CD4-positive, alpha-beta memory T cell (primary cell): ENCODE measurements at regions of chr22 and their contacts with region 1.

Region 1: GRCh38 chr22:21972293-21972779 is 10.3 kb downstream of the TOP3B start:
- DNase-seq: peak in 4 of 5 donors; percentile 30 to 42 (median 37)
- H3K4me3 ChIP-seq: no peak overlapping the region
- H3K4me3 Mint-ChIP-seq: no peak overlapping the region
- H3K27ac ChIP-seq: no peak overlapping the region
- H3K27ac Mint-ChIP-seq: peak overlapping the region in 1 of 7 donors; percentile 42
- H3K4me1 ChIP-seq: no peaks in the 10 kb centered on the region
- H3K4me1 Mint-ChIP-seq: peaks cover 6 to 16% (median 11%) of the 10 kb centered on the region in 4 donors
- H3K27me3 ChIP-seq: no peaks in the 10 kb centered on the region
- H3K27me3 Mint-ChIP-seq: no peaks in the 10 kb centered on the region

Region 2: DNA sequence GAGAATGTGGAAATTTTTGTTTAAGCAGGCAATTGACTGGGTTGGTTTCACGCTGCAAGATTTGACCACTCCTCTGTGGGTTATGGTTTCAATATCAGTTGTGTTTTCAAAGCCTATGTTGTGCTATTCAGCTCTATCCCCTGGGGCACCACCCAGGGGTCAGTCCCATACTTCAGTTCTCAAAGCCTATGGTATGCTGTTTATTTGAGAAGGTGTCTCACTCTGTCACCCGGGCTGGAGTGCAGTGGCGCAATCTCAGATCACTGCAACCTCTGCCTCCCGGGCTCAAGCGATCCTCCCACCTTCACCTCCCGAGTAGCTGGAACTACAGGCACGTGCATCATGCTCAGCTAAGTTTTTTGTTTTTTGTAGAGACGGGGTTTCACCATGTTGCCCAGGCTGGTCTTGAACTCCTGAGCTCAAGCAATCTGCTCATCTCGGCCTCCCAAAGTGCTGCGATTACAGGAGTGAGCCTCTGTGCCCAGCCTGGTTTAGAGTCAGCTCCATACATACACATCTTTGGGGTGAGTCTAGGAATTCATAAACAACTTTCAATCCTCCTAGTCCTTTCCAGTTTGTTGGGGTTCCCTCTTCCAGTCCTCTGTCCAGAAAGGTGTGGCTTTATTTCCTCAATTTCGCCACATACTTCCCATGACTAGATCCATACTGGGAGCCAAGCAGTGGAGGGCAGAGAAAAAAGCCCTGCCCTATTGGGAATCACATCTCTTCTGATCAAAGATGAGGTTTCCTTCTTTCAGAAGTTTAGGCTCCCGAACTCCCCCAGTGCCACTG is 69.8 kb before region 1 on chr22:
- CTCF ChIA-PET with region 1: no interaction called
- POLR2A ChIA-PET with region 1: no interaction called
- intact Hi-C with region 1: no loop called
- DNase-seq: no peak
- H3K4me3 ChIP-seq: no peak overlapping the region
- H3K4me3 Mint-ChIP-seq: no peak overlapping the region
- H3K27ac ChIP-seq: no peak overlapping the region
- H3K27ac Mint-ChIP-seq: no peak overlapping the region
- H3K4me1 ChIP-seq: no peaks in the 10 kb centered on the region
- H3K4me1 Mint-ChIP-seq: peaks cover 0 to 2% (median 0%) of the 10 kb centered on the region in 4 donors
- H3K27me3 ChIP-seq: no peaks in the 10 kb centered on the region
- H3K27me3 Mint-ChIP-seq: peaks cover 0 to 2% of the 10 kb centered on the region in 2 donors

Region 3: GRCh38 chr22:21982338-21982965 is 10.1 kb after region 1 on chr22 and contains the start of gene TOP3B:
- CTCF ChIA-PET with region 1: interaction called, 27 read pairs
- POLR2A ChIA-PET with region 1: interaction called, 29 read pairs
- intact Hi-C with region 1: no loop called
- DNase-seq: peak; percentile 74 to 76 (median 75)
- H3K4me3 ChIP-seq: peak within 1 kb of the TSS; percentile 77 to 81
- H3K4me3 Mint-ChIP-seq: peak within 1 kb of the TSS; percentile 88 to 93 (median 90)
- H3K27ac ChIP-seq: peak within 1 kb of the TSS; percentile 68
- H3K27ac Mint-ChIP-seq: peak within 1 kb of the TSS; percentile 81 to 92 (median 86)
- H3K4me1 ChIP-seq: peaks cover 17% of the 10 kb centered on the region
- H3K4me1 Mint-ChIP-seq: peaks cover 22 to 50% (median 35%) of the 10 kb centered on the region in 4 donors
- H3K27me3 ChIP-seq: no peaks in the 10 kb centered on the region
- H3K27me3 Mint-ChIP-seq: no peaks in the 10 kb centered on the region
- total RNA-seq, gene TOP3B: 78.1 to 81.1 TPM

Region 4: DNA sequence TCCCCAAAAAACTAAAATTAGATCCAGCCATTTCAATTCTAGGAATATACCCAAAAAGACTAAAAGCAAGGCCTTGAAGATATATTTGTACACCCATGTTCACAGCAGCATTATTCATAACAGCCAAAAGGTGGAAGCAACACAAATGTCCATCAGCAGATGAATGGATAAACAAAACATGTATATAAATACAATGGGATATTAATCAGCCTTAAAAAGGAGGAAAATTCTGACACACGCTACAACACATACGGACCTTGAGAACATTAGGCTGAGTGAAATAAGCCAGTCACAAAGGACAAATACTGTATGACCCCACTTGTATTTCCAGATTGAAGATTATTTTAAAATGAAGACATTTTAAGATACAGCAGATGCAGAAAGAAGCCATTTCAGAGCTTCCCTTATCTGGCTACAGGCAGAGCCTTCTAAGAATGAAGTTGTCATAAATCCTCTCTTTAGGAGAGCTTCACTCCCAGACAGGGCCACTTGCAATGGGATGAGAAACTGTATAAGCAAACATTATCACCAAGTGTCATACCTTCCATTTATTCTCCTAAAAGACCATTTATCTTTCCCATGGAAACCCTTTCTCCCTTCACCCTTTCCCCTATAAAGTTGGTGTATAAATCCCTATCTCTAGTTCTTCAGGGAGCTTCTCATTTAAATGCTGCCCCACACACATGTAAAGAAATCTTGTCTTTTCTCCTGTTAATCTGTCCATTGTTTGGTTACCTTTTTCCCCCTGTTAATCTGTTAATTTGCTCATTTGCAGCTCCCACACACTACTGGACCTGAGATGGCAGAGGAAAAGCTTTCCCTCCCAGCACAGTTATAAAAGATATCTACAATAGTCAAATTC is 29.6 kb after region 1 on chr22:
- CTCF ChIA-PET with region 1: interaction called, 12 read pairs
- POLR2A ChIA-PET with region 1: no interaction called
- intact Hi-C with region 1: no loop called
- DNase-seq: no peak
- H3K4me3 ChIP-seq: no peak overlapping the region
- H3K4me3 Mint-ChIP-seq: no peak overlapping the region
- H3K27ac ChIP-seq: no peak overlapping the region
- H3K27ac Mint-ChIP-seq: peak overlapping the region in 1 of 7 donors; percentile 5
- H3K4me1 ChIP-seq: no peaks in the 10 kb centered on the region
- H3K4me1 Mint-ChIP-seq: no peaks in the 10 kb centered on the region
- H3K27me3 ChIP-seq: no peaks in the 10 kb centered on the region
- H3K27me3 Mint-ChIP-seq: peaks cover 3 to 5% of the 10 kb centered on the region in 2 donors